ENCODE measurements at regions of chr19 and their contacts with region 1.

Region 1: DNA sequence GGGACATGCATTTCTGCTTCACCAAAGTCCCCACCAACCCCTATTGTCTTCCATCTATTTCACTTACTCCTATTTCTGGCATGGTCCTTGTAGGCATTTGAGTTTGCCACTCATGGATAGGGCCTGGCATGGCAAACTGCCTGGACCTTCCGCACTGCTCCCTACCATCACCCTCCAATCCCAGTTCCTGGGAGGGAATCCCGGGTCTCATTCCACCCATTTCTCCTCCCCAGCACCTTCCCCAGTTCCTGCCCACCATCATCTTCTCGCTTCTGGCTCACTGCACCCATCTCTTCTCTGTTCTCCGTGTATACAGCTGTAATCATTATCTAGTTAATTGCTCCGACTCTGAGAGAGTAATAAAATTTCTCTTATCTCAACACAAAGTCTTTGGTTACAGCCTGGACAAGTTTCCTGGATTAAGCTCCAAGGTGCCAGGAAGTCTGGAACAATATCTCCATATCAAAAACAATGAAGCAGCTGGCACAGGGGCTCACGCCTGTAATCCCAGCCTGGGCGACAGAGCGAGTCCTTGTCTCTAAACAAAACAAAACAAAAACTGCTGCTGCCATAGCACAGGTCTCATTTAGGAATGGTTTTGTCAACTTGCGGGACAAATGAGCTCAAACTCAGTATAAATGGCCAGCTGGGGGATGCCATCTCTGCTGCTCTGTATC is 17.0 kb upstream of the COX7A1 start:
- DNase-seq: no peak
- H3K27ac ChIP-seq: peak overlapping the region; percentile 11; the same call in 1 of the 2 replicates
- CTCF ChIP-seq: no peak

Region 2: DNA sequence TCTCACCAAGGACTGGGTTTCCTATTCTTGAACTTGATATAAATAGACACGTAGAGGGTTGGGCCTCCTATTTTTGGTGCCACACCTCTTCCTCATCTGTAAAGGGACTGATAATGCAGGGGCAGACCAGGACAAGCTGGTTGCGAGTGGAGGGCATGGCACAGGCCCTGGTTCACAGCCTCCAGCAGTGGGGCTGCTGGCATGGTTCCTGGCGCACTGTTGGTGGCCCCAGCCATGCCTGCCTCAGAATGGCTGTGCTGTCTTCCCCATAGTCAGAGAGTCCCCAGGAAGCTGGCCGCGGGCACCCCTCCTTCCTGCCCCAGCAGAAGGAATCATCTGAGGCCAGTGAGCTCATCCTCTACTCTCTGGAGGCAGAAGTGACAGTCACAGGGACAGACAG is 68.7 kb before region 1 on chr19:
- CTCF ChIA-PET with region 1: no interaction called
- POLR2A ChIA-PET with region 1: no interaction called
- DNase-seq: no peak
- H3K27ac ChIP-seq: peak overlapping the region; percentile 32; the same call in 1 of the 2 replicates
- CTCF ChIP-seq: no peak

Region 3: GRCh38 chr19:36128392-36128736 is 40.9 kb before region 1 on chr19:
- CTCF ChIA-PET with region 1: interaction called, 32 read pairs
- POLR2A ChIA-PET with region 1: interaction called, 8 read pairs
- DNase-seq: no peak
- H3K27ac ChIP-seq: peak overlapping the region; percentile 97
- CTCF ChIP-seq: no peak

Region 4: GRCh38 chr19:37484406-37485115 is 1315.3 kb after region 1 on chr19:
- CTCF ChIA-PET with region 1: no interaction called
- POLR2A ChIA-PET with region 1: no interaction called
- DNase-seq: no peak
- H3K27ac ChIP-seq: no peak overlapping the region
- CTCF ChIP-seq: no peak